T-cell (primary cell): ENCODE measurements at regions of chr12 and their contacts with region 1.

Region 1: GRCh38 chr12:31682136-31682962 is 22.9 kb downstream of the ETFBKMT start:
- DNase-seq: peak; percentile 37 to 89 (median 60)
- ATAC-seq: peak; percentile 64 to 86 (median 78)
- H3K4me3 ChIP-seq: no peak overlapping the region
- H3K4me3 Mint-ChIP-seq: peak overlapping the region in 1 of 3 donors; percentile 37
- H3K27ac ChIP-seq: peak overlapping the region; percentile 44
- H3K27ac Mint-ChIP-seq: peak overlapping the region; percentile 67 to 79
- H3K4me1 ChIP-seq: peaks cover 0 to 5% of the 10 kb centered on the region in 2 experiments
- H3K4me1 Mint-ChIP-seq: peaks cover 6 to 13% (median 11%) of the 10 kb centered on the region in 3 donors
- H3K27me3 ChIP-seq: no peaks in the 10 kb centered on the region
- H3K27me3 Mint-ChIP-seq: no peaks in the 10 kb centered on the region

Region 2: GRCh38 chr12:31651893-31652521 is 30.3 kb before region 1 on chr12:
- CTCF ChIA-PET with region 1: interaction called in 1 of 2 experiments, 20 read pairs
- POLR2A ChIA-PET with region 1: no interaction called
- DNase-seq: no peak
- ATAC-seq: no peak
- H3K4me3 ChIP-seq: no peak overlapping the region
- H3K4me3 Mint-ChIP-seq: peak overlapping the region in 2 of 3 donors; percentile 44 to 50
- H3K27ac ChIP-seq: no peak overlapping the region
- H3K27ac Mint-ChIP-seq: peak overlapping the region; percentile 91 to 96
- H3K4me1 ChIP-seq: peaks cover 2 to 5% of the 10 kb centered on the region in 2 experiments
- H3K4me1 Mint-ChIP-seq: peaks cover 8 to 14% (median 10%) of the 10 kb centered on the region in 3 donors
- H3K27me3 ChIP-seq: no peaks in the 10 kb centered on the region
- H3K27me3 Mint-ChIP-seq: no peaks in the 10 kb centered on the region

Region 3: GRCh38 chr12:32061033-32061432 is 378.7 kb after region 1 on chr12:
- CTCF ChIA-PET with region 1: interaction called, 7 to 12 read pairs
- POLR2A ChIA-PET with region 1: interaction called in 1 of 2 experiments, 9 read pairs
- DNase-seq: no peak
- ATAC-seq: no peak
- H3K4me3 ChIP-seq: no peak overlapping the region
- H3K4me3 Mint-ChIP-seq: no peak overlapping the region
- H3K27ac ChIP-seq: no peak overlapping the region
- H3K27ac Mint-ChIP-seq: no peak overlapping the region
- H3K4me1 ChIP-seq: peaks cover 0 to 4% of the 10 kb centered on the region in 2 experiments
- H3K4me1 Mint-ChIP-seq: peaks cover 0 to 10% (median 9%) of the 10 kb centered on the region in 3 donors
- H3K27me3 ChIP-seq: no peaks in the 10 kb centered on the region
- H3K27me3 Mint-ChIP-seq: no peaks in the 10 kb centered on the region